GM12878 (cell line): ENCODE measurements at regions of chr2 and their contacts with region 1.

Region 1: DNA sequence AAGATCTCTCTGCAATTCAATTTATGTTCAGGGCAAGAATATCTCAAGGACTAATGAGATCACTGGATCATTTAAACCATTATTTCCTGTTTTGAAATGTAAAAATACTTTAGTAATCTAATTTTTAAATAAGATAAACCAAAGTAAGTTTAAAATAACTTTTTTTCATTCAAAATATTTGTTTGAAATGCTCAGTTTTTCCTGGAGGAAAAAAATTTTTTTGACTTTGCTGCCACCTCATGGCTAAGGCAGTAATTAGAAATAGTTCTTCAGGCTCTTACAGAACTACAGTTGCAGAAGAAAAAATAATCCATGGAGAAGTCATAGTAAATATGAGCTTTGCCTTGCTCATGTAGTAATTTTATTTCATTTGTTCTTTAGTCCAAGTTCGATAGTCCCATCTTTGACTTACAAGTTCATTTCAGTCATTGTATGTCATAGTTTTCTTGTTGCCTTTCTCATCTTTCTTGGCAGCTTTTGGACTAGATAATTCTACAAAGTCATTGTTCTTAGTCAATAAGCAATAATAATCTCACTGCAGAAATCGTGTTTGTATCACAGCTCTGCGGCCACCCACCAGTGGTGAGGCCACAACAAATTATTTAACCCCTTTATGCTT is 127.4 kb downstream of the DPP4 start:
- DNase-seq: no peak
- ATAC-seq: peak; percentile 60
- H3K4me3 ChIP-seq: no peak overlapping the region
- H3K27ac ChIP-seq: no peak overlapping the region
- H3K4me1 ChIP-seq: no peaks in the 10 kb centered on the region
- H3K27me3 ChIP-seq: no peaks in the 10 kb centered on the region
- CTCF ChIP-seq: peak; percentile 33 to 48 (median 36); a peak in 3 of 6 replicates
- EP300 ChIP-seq: no peak
- POLR2A ChIP-seq: no peak
- RAD21 ChIP-seq: peak; percentile 76

Region 2: DNA sequence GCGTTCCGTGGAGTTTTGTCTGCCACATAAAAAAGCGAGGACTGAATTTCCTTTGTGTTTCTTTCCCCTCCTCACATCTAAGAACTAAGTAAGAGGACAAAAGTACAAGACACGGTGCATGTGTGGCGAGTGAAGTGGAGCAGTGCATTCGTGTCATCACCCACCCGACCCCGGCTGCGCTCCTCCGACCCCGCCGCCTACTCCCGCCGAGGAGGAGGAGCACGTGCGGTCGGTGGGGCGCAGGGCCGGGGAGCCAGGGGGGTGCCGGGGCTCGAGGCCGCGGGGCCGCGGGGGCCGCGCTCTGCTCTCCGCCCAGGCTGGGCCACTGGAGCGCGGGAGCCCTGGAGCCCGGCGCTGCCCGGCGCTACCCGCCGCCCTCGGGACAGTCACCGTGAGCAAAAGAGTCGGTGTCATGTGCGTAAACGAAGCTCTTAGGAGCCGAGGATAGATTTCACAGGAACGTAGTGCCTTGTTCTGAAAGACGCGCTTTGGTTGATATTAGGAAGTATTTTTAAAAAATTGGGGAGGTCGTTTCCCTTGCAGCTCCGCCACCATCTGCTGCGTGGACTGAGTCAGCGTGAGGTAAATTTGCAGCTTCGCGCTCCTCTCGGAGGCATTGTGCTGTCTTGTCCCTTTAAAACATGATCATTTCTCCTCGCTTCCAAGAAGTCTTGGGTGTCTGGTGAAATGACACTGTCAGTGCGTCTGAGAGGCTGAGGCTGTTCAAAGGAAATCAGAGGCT is 519.5 kb before region 1 on chr2:
- CTCF ChIA-PET with region 1: no interaction called
- POLR2A ChIA-PET with region 1: no interaction called
- RAD21 ChIA-PET with region 1: no interaction called
- SMC1A ChIA-PET with region 1: no interaction called
- in situ Hi-C with region 1: no loop called
- intact Hi-C with region 1: loop called (anchors 10 kb)
- DNase-seq: no peak
- ATAC-seq: peak; percentile 29; the same call in 1 of the 3 replicates
- H3K4me3 ChIP-seq: no peak overlapping the region
- H3K27ac ChIP-seq: no peak overlapping the region
- H3K4me1 ChIP-seq: no peaks in the 10 kb centered on the region
- H3K27me3 ChIP-seq: peaks cover 8 to 39% of the 10 kb centered on the region in 2 experiments
- CTCF ChIP-seq: peak in 2 of 3 experiments; percentile 26 to 36; a peak in 3 of 6 replicates
- EP300 ChIP-seq: no peak
- POLR2A ChIP-seq: no peak
- RAD21 ChIP-seq: no peak

Region 3: GRCh38 chr2:161586517-161587167 is 360.0 kb before region 1 on chr2:
- CTCF ChIA-PET with region 1: interaction called, 215 read pairs
- POLR2A ChIA-PET with region 1: no interaction called
- RAD21 ChIA-PET with region 1: interaction called, 102 read pairs
- SMC1A ChIA-PET with region 1: interaction called, 122 read pairs
- in situ Hi-C with region 1: loop called (anchors 5 kb)
- intact Hi-C with region 1: loop called (anchors 1 kb)
- DNase-seq: no peak
- ATAC-seq: peak; percentile 60; the same call in 2 of the 3 replicates
- H3K4me3 ChIP-seq: no peak overlapping the region
- H3K27ac ChIP-seq: no peak overlapping the region
- H3K4me1 ChIP-seq: no peaks in the 10 kb centered on the region
- H3K27me3 ChIP-seq: no peaks in the 10 kb centered on the region
- CTCF ChIP-seq: peak; percentile 60 to 65 (median 61)
- EP300 ChIP-seq: no peak
- POLR2A ChIP-seq: no peak
- RAD21 ChIP-seq: peak; percentile 80

Region 4: DNA sequence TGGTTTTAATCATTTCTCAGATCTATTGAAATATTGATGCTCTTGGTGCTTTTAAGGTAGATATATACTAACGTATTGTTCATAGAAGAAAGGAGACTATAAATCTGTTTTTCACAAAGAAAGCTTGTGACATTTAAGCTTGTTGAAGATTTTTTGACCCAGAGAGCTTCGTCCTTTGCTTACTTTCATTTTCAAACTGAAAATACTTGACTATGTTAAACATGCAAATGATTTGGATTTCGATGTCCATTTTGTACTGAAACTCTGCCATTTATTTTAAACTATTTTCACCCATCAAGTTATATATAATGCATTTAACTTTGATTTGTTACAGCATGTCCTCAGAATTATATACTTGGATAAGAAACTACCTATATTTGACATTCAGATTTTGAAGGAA is 237.2 kb before region 1 on chr2:
- CTCF ChIA-PET with region 1: interaction called, 4 read pairs
- POLR2A ChIA-PET with region 1: no interaction called
- RAD21 ChIA-PET with region 1: interaction called, 3 read pairs
- SMC1A ChIA-PET with region 1: no interaction called
- in situ Hi-C with region 1: no loop called
- intact Hi-C with region 1: loop called (anchors 10 kb)
- DNase-seq: no peak
- ATAC-seq: peak; percentile 64
- H3K4me3 ChIP-seq: 0 out of 2 replicates have a peak overlapping the region, but pooled peaks have one; percentile 1
- H3K27ac ChIP-seq: no peak overlapping the region
- H3K4me1 ChIP-seq: no peaks in the 10 kb centered on the region
- H3K27me3 ChIP-seq: no peaks in the 10 kb centered on the region
- CTCF ChIP-seq: no peak
- EP300 ChIP-seq: no peak
- POLR2A ChIP-seq: no peak
- RAD21 ChIP-seq: no peak

Region 5: DNA sequence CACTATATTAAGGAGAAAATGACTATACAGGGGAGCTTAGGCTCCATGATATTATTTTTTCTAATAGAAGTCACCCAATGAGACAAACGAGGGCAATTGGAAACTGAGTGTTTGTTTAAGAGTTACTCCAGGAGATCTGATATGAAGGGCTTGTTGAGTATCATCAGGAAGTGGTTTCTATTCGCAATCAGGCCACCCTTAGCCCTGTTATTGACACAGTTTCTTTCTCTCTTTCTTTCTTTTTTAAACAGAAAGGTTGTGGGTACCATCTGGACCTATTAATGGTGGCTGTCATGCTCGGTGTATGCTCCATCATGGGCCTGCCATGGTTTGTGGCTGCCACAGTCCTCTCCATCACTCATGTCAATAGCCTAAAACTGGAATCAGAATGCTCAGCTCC is 10.1 kb after region 1 on chr2:
- CTCF ChIA-PET with region 1: interaction called, 12 read pairs
- POLR2A ChIA-PET with region 1: no interaction called
- RAD21 ChIA-PET with region 1: interaction called, 6 read pairs
- SMC1A ChIA-PET with region 1: interaction called, 5 read pairs
- in situ Hi-C with region 1: no loop called
- intact Hi-C with region 1: no loop called
- DNase-seq: no peak
- ATAC-seq: no peak
- H3K4me3 ChIP-seq: no peak overlapping the region
- H3K27ac ChIP-seq: no peak overlapping the region
- H3K4me1 ChIP-seq: no peaks in the 10 kb centered on the region
- H3K27me3 ChIP-seq: no peaks in the 10 kb centered on the region; a peak in 1 of 4 replicates
- CTCF ChIP-seq: no peak
- EP300 ChIP-seq: no peak
- POLR2A ChIP-seq: no peak
- RAD21 ChIP-seq: no peak

Region 6: GRCh38 chr2:162196638-162197037 is 250.0 kb after region 1 on chr2:
- CTCF ChIA-PET with region 1: no interaction called
- POLR2A ChIA-PET with region 1: no interaction called
- RAD21 ChIA-PET with region 1: no interaction called
- SMC1A ChIA-PET with region 1: no interaction called
- in situ Hi-C with region 1: no loop called
- intact Hi-C with region 1: no loop called
- DNase-seq: no peak
- ATAC-seq: no peak
- H3K4me3 ChIP-seq: no peak overlapping the region
- H3K27ac ChIP-seq: no peak overlapping the region
- H3K4me1 ChIP-seq: no peaks in the 10 kb centered on the region
- H3K27me3 ChIP-seq: no peaks in the 10 kb centered on the region; a peak in 2 of 4 replicates
- CTCF ChIP-seq: no peak
- EP300 ChIP-seq: no peak
- POLR2A ChIP-seq: no peak
- RAD21 ChIP-seq: no peak